ENCODE measurements at regions of chr4 and their contacts with region 1.

Region 1: DNA sequence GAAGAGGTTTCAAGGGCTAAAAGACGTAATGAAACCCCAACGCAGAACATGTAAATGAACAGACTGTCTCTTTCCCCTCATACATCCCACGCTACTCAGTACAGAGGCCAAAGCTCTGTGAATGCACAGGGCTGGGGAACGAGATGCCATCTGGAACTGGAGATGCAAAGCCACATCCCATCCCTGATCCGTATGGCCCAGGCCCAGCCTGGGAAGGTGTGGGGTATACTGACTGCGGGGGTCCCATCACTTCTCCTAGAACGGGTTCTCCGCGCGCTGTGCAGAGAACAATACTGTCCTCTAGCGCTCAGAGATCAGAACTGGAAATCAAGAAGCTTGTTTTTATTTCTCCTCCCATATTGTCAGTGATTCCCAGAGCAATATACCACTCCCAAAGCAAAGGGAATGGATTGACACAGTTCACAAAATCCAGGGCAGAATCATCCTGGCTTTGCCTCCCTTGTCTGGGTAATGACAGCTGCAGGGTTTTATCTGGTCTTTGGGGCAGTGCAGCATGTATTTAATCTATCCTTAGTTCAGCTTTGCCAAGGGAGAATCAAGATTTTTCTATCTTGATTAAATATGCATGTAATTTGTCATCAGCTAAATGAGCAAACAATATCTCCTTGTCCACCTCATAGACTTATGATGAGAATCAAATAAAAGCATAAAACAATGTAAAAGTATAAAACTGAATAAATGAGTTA is 47.3 kb upstream of the TLR3 start:
- DNase-seq: peak; percentile 56
- H3K4me3 ChIP-seq: no peak overlapping the region
- H3K27ac ChIP-seq: no peak overlapping the region
- H3K4me1 ChIP-seq: no peaks in the 10 kb centered on the region
- H3K27me3 ChIP-seq: no peaks in the 10 kb centered on the region; the same call in 1 of the 2 replicates

Region 2: DNA sequence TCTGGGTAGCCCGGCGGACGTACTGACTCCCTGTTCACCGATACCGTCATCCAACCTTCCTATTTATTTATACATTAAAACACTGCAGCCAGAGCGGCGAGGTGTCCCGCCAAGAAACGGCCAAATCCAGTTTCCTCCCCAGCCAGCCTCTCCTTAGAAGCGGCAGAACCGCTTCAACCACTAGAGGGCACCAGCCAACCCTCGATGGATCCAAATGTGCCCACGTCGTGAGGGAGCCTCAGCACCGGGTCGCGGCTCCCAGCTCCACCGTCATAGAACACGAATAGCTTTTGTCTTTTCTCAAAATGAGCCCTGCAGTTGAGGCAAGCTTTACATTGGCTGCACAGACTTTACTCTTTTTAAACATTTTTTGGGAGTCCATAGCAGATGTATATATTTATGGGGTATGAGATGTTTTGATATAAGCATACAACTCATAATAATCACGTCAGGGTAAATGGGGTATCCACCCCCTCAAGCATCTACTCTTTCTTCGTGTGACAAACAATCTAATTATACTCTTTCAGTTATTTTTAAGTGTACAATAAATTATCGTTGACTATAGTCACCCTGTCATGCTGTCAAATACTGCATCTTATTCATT is 1016.3 kb before region 1 on chr4:
- in situ Hi-C with region 1: no loop called
- DNase-seq: peak; percentile 85
- H3K4me3 ChIP-seq: peak overlapping the region; percentile 42
- H3K27ac ChIP-seq: no peak overlapping the region
- H3K4me1 ChIP-seq: no peaks in the 10 kb centered on the region
- H3K27me3 ChIP-seq: peaks cover 6% of the 10 kb centered on the region

Region 3: GRCh38 chr4:185437809-185438208 is 583.8 kb before region 1 on chr4:
- in situ Hi-C with region 1: no loop called
- DNase-seq: no peak
- H3K4me3 ChIP-seq: no peak overlapping the region
- H3K27ac ChIP-seq: no peak overlapping the region
- H3K4me1 ChIP-seq: no peaks in the 10 kb centered on the region
- H3K27me3 ChIP-seq: no peaks in the 10 kb centered on the region

Region 4: GRCh38 chr4:185640811-185641675 is 380.6 kb before region 1 on chr4:
- in situ Hi-C with region 1: loop called (anchors 10 kb)
- DNase-seq: peak; percentile 86
- H3K4me3 ChIP-seq: no peak overlapping the region
- H3K27ac ChIP-seq: no peak overlapping the region
- H3K4me1 ChIP-seq: 0 out of 2 replicates have a peak, but pooled peaks cover 4% of the 10 kb centered on the region
- H3K27me3 ChIP-seq: peaks cover 36% of the 10 kb centered on the region

Measured in GM23248 (cell line).